ENCODE measurements at regions of chr17 and their contacts with region 1.

Region 1: GRCh38 chr17:8745586-8746500 is 1.2 kb upstream of the CCDC42 start:
- DNase-seq: peak; percentile 4
- H3K4me3 ChIP-seq: peak overlapping the region; percentile 65
- H3K27ac ChIP-seq: no peak overlapping the region
- H3K27me3 ChIP-seq: peaks cover 4% of the 10 kb centered on the region
- CTCF ChIP-seq: peak; percentile 69

Region 2: GRCh38 chr17:8409966-8410864 is 335.6 kb before region 1 on chr17:
- CTCF ChIA-PET with region 1: interaction called, 29 read pairs
- POLR2A ChIA-PET with region 1: no interaction called
- DNase-seq: peak; percentile 71
- H3K4me3 ChIP-seq: no peak overlapping the region
- H3K27ac ChIP-seq: no peak overlapping the region
- H3K27me3 ChIP-seq: peaks cover 5% of the 10 kb centered on the region
- CTCF ChIP-seq: peak; percentile 84

Region 3: GRCh38 chr17:8572764-8573163 is 173.1 kb before region 1 on chr17:
- CTCF ChIA-PET with region 1: interaction called, 17 read pairs
- POLR2A ChIA-PET with region 1: no interaction called
- DNase-seq: no peak
- H3K4me3 ChIP-seq: no peak overlapping the region
- H3K27ac ChIP-seq: no peak overlapping the region
- H3K27me3 ChIP-seq: no peaks in the 10 kb centered on the region
- CTCF ChIP-seq: peak; percentile 14; the same call in 1 of the 2 replicates

Region 4: DNA sequence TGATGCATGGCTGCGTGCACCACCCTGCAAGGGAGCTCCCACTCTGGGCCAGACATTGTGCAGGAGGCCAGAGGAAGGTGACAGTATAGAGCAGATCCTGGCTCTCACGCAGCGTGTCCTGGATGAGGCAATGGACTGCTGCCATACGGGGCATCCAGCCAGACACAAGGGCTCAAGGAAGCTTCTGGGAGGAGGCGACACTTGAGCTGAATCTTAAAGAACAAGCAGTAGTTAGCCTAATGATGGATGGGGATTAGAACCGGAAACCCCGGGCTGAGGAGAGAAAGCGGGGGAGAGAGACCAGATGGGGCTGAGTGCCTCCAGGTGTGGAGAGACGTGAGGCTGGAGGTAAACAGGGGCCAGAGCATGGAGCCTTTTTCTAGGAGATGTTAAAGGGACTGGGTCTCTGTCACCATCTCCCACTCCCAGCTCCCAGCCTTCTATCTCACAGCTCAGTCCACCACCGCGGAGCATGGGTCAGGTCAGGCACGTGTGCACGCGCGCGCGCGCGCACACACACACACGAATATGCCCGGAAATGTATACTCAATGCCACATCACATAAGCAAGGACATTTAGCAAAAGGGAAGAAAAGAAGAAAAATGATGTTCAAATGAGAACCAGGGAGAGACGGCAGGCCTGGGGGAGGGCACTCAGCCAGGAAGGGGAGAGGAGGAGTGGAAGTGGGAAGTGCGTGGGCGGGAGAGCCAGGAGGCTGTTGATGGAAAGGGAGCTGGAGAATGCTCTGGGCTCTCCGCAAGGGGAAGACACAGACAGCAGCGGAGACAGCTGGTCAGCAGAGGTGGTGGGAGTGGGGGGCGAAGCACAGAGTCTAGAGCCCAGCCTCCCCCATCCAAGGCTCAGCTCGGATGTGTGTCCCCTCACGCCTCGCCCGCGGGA is 47.4 kb before region 1 on chr17:
- CTCF ChIA-PET with region 1: interaction called, 22 read pairs
- POLR2A ChIA-PET with region 1: no interaction called
- DNase-seq: peak; percentile 69
- H3K4me3 ChIP-seq: peak overlapping the region; percentile 5; the same call in 1 of the 2 replicates
- H3K27ac ChIP-seq: peak overlapping the region; percentile 98
- H3K27me3 ChIP-seq: peaks cover 6% of the 10 kb centered on the region
- CTCF ChIP-seq: 0 out of 2 replicates have a peak, but pooled peaks have one; percentile 16

Region 5: DNA sequence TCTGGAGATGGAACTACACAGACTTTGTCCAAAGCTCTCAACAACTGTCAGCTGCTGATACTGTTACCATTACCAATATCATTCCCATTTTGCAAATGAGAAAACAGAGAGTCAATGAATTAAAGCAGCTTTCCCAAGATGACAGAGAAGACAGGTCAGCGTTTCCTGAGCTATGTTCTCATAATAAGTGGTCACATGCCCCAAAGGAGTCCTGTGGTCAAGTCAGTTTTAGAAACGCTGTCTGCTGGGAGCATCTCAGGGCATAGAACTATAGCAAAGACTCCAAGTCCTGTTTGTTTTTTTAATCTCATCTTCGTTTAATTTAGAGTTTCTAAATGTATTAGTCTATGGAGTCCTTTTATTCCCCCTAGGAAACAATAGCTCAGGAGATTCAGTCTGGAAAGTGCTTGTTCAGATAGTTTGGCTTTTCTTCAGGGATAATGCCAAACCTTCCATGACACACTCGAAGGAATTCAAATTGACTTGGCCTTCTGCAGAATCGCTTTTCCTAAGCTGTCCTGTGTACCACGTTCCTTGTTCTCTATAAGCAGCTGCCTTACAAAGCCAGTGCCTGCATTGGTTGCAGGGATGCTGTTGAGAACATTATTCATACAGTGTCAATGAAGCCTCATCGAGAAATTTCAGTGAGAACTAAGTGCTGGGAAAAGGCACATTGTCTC is 13.3 kb before region 1 on chr17:
- CTCF ChIA-PET with region 1: interaction called, 11 read pairs
- POLR2A ChIA-PET with region 1: no interaction called
- DNase-seq: no peak
- H3K4me3 ChIP-seq: no peak overlapping the region
- H3K27ac ChIP-seq: no peak overlapping the region
- H3K27me3 ChIP-seq: no peaks in the 10 kb centered on the region
- CTCF ChIP-seq: no peak

Region 6: DNA sequence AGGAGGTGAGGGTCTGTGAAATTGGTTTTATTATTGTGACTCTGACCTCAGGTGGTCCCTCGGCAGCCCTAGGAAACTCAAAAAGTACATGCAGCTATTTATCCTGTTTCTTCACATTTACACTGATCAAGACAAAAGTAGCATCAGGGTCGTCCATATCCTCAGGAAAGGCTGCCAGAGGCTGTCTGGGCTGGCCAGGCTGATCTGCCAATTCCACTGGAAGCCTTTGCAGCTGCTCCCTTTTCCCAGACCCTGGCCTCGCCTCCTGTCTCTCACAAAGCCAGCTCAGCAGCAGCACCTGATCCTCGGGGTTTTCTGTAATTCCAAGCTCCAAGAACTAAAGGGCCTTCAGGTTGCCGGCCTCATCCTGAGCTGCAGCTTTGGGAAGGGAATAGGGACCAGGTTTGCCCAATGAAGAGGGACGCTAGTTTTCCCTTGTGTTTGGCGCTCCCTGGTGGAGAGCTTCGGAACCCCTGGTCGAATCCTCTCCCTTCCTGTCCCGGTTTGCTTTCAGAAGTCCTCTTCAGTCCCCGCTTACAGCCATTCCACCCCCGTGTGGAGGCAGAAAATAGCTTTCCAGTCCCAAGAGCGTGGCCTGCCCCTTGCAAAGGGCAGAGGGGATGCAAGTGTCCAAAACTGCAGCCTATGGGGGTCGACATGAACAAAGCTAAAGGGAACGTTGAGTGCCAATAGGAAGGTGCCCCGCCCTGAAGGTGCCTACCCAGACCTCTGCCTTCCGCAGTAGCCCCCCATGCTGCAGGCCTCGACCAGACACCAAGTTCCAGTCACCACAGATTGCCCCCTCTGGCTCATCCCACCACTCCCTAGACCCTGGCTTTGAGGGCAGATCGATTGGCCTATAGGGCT is 39.9 kb after region 1 on chr17:
- CTCF ChIA-PET with region 1: interaction called, 13 read pairs
- POLR2A ChIA-PET with region 1: no interaction called
- DNase-seq: peak; percentile 29
- H3K4me3 ChIP-seq: no peak overlapping the region
- H3K27ac ChIP-seq: no peak overlapping the region
- H3K27me3 ChIP-seq: peaks cover 8% of the 10 kb centered on the region
- CTCF ChIP-seq: peak; percentile 90